Dorsolateral prefrontal cortex (tissue), 120 donors: ENCODE measurements at regions of chr16 and their contacts with region 1.

Region 1: GRCh38 chr16:66483689-66484481 is 56.8 kb downstream of the BEAN1 start:
- DNase-seq: peak; percentile 67 to 83 (median 78)
- H3K4me3 ChIP-seq: no peak overlapping the region
- H3K27ac ChIP-seq: peak overlapping the region in 2 of 59 donors; percentile 5 to 25
- H3K27me3 ChIP-seq: no peaks in the 10 kb centered on the region
- CTCF ChIP-seq: peak; percentile 59 to 97 (median 92)

Region 2: GRCh38 chr16:66406534-66407221 is 77.2 kb before region 1 on chr16:
- intact Hi-C with region 1: loop called (anchors 1 kb)
- DNase-seq: peak; percentile 78 to 89 (median 89)
- H3K4me3 ChIP-seq: peak overlapping the region; percentile 51 to 98 (median 72)
- H3K27ac ChIP-seq: peak overlapping the region in 44 of 59 donors; percentile 3 to 87 (median 68)
- H3K27me3 ChIP-seq: peaks cover 0 to 10% (median 0%) of the 10 kb centered on the region in 45 donors
- CTCF ChIP-seq: peak; percentile 79 to 99 (median 92)

Region 3: DNA sequence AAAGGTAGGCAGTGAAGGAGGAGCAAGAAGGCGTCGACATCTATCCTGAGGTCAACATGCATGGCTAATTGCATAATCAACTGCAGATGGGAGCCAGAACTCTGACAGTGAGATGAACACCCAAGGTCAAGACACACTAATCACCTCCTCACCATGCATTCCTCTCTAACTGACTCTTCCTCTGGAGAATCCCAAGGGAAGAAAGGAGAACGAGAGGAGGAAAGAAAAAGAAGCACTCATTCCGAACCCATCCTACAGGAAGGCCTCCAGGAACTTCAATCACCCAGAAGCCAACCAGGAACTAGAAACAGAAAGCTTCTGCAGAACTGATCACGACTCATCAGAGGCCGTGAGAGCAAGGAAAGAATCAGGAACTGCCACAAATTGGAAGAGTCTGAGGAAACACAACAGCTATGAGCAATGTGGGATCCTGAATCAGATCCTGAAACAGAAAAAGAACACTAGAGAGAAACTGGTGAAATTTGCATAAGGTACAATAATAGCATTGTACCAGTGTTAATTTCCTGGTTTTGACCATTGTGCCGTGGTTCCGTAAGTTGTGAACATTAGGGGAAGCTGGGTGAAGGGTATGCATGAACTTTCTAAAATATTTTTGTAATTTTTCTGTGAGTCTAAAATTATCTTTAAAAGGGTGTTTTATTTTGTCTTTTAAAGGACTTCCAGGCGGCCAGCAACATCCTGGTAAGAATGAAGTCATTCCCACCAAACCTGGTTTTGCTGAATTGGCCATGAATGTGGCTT is 66.8 kb before region 1 on chr16:
- intact Hi-C with region 1: no loop called
- DNase-seq: no peak
- H3K4me3 ChIP-seq: no peak overlapping the region
- H3K27ac ChIP-seq: no peak overlapping the region
- H3K27me3 ChIP-seq: peaks cover 0 to 11% (median 0%) of the 10 kb centered on the region in 45 donors
- CTCF ChIP-seq: no peak

Region 4: DNA sequence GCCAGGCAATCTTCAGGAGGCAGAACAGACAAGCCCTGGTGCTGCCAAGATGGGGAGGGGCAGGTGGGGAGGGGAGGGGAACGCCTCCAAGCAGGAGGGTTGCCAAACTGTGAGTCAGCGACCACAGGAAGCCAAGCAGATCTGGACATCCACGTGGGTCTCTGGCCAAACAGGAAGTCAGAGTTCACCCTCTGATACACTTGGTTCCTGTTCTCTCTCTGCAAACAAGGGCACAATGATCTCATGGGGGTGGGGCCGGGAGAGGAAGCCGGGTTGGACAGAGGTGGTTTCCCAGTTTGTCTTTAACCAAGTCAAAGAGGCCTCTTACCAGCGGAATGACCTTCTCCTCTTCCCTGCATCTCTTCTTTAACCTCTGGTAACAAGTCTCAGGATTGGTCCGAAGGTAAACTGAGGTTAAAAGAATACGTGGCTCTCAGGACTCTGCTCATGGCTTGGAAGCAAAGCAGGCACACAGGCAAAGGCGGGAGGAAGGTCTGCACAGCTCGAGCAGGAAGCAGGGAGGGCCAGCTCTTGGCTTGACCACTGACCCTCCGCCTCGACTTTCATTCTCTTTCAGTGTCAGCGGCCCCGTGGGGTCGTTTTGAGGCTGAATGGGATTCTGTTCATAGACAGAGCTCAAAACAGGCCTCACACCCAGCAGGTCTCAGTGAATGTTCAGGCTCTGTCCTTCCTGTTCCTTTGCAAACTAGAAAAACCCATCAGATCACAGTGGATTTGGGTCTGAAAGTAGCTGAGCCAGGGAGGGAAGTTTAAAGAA is 33.1 kb after region 1 on chr16:
- intact Hi-C with region 1: loop called (anchors 5 kb)
- DNase-seq: peak; percentile 43 to 95 (median 92)
- H3K4me3 ChIP-seq: peak overlapping the region in 46 of 59 donors; percentile 1 to 58 (median 34)
- H3K27ac ChIP-seq: peak overlapping the region; percentile 83 to 100 (median 98)
- H3K27me3 ChIP-seq: no peaks in the 10 kb centered on the region
- CTCF ChIP-seq: peak in 15 of 56 donors; percentile 4 to 37 (median 18)

Region 5: GRCh38 chr16:66539623-66540469 is 56.0 kb after region 1 on chr16:
- intact Hi-C with region 1: no loop called
- DNase-seq: peak in 1 of 10 donors; percentile 51
- H3K4me3 ChIP-seq: no peak overlapping the region
- H3K27ac ChIP-seq: peak overlapping the region in 1 of 59 donors; percentile 21
- H3K27me3 ChIP-seq: no peaks in the 10 kb centered on the region
- CTCF ChIP-seq: no peak

Region 6: GRCh38 chr16:66552286-66553177 is 68.6 kb after region 1 on chr16 and contains the start of gene CKLF:
- intact Hi-C with region 1: loop called in 1 of 2 experiments (anchors 2 kb)
- DNase-seq: peak; percentile 75 to 95 (median 84)
- H3K4me3 ChIP-seq: peak within 1 kb of the TSS; percentile 61 to 98 (median 80)
- H3K27ac ChIP-seq: peak within 1 kb of the TSS; percentile 90 to 100 (median 98)
- H3K27me3 ChIP-seq: no peaks in the 10 kb centered on the region
- CTCF ChIP-seq: peak in 33 of 56 donors; percentile 8 to 58 (median 25)
- total RNA-seq, gene CKLF: 9.9 to 33.4 (median 19.9) TPM

Region 7: GRCh38 chr16:66588981-66589713 is 105.3 kb after region 1 on chr16:
- intact Hi-C with region 1: loop called in 1 of 2 experiments (anchors 5 kb)
- DNase-seq: peak in 1 of 10 donors; percentile 32
- H3K4me3 ChIP-seq: no peak overlapping the region
- H3K27ac ChIP-seq: peak overlapping the region in 1 of 59 donors; percentile 9
- H3K27me3 ChIP-seq: no peaks in the 10 kb centered on the region
- CTCF ChIP-seq: peak in 54 of 56 donors; percentile 12 to 65 (median 50)

Region 8: GRCh38 chr16:66608241-66609138 is 124.6 kb after region 1 on chr16:
- intact Hi-C with region 1: loop called (anchors 5 kb)
- DNase-seq: peak; percentile 70 to 88 (median 83)
- H3K4me3 ChIP-seq: no peak overlapping the region
- H3K27ac ChIP-seq: peak overlapping the region in 3 of 59 donors; percentile 4 to 44 (median 23)
- H3K27me3 ChIP-seq: no peaks in the 10 kb centered on the region
- CTCF ChIP-seq: peak; percentile 64 to 94 (median 86)

Region 9: DNA sequence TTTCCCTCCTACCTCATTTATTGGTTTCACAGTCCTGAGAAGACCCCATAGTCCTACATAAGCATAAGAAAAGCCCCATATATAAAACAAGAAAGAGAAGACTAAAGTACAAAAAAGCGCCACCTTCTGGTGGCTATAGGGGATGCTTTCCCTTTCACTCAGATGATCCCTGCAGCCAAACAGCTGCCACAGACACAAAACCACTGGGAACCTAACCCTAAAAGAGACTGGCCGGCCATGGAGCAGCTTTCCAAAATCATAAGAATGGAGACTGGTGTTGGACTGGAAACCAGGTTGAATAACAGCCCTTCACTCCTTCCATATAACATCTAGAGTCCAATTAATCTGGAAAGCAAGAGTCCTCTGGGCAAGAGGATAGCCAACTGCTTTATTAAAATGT is 256.1 kb after region 1 on chr16:
- intact Hi-C with region 1: loop called in 1 of 2 experiments (anchors 10 kb)
- DNase-seq: peak in 1 of 10 donors; percentile 47
- H3K4me3 ChIP-seq: peak overlapping the region in 16 of 59 donors; percentile 2 to 40 (median 21)
- H3K27ac ChIP-seq: peak overlapping the region; percentile 76 to 99 (median 96)
- H3K27me3 ChIP-seq: no peaks in the 10 kb centered on the region
- CTCF ChIP-seq: peak in 55 of 56 donors; percentile 4 to 72 (median 57)